Mammary epithelial cell (primary cell): ENCODE measurements at regions of chr9 and their contacts with region 1.

Region 1: GRCh38 chr9:94065535-94065961 is 18.7 kb upstream of the PTPDC1 start:
- DNase-seq: peak; percentile 69
- H3K4me3 ChIP-seq: no peak overlapping the region
- H3K27ac ChIP-seq: no peak overlapping the region
- H3K4me1 ChIP-seq: peaks cover 3% of the 10 kb centered on the region
- H3K27me3 ChIP-seq: no peaks in the 10 kb centered on the region
- CTCF ChIP-seq: peak; percentile 86 to 87

Region 2: GRCh38 chr9:94014065-94014654 is 51.4 kb before region 1 on chr9:
- CTCF ChIA-PET with region 1: interaction called, 5 read pairs
- dilution Hi-C with region 1: no loop called
- in situ Hi-C with region 1: no loop called
- intact Hi-C with region 1: loop called (anchors 1 kb)
- DNase-seq: peak; percentile 24
- H3K4me3 ChIP-seq: no peak overlapping the region
- H3K27ac ChIP-seq: no peak overlapping the region
- H3K4me1 ChIP-seq: no peaks in the 10 kb centered on the region
- H3K27me3 ChIP-seq: no peaks in the 10 kb centered on the region
- CTCF ChIP-seq: peak; percentile 68 to 69

Region 3: GRCh38 chr9:94029932-94030317 is 35.6 kb before region 1 on chr9:
- CTCF ChIA-PET with region 1: no interaction called
- dilution Hi-C with region 1: loop called (anchors 5 kb)
- in situ Hi-C with region 1: no loop called
- intact Hi-C with region 1: no loop called
- DNase-seq: no peak
- H3K4me3 ChIP-seq: peak overlapping the region; percentile 77 to 84 (median 84)
- H3K27ac ChIP-seq: peak overlapping the region; percentile 56
- H3K4me1 ChIP-seq: peaks cover 16% of the 10 kb centered on the region
- H3K27me3 ChIP-seq: no peaks in the 10 kb centered on the region
- CTCF ChIP-seq: no peak

Region 4: GRCh38 chr9:94166237-94166963 is 100.9 kb after region 1 on chr9:
- CTCF ChIA-PET with region 1: no interaction called
- dilution Hi-C with region 1: no loop called
- in situ Hi-C with region 1: loop called in 1 of 2 experiments (anchors 25 kb)
- intact Hi-C with region 1: loop called (anchors 1 kb)
- DNase-seq: peak; percentile 98
- H3K4me3 ChIP-seq: peak overlapping the region; percentile 68 to 98 (median 90)
- H3K27ac ChIP-seq: peak overlapping the region; percentile 96
- H3K4me1 ChIP-seq: peaks cover 13% of the 10 kb centered on the region
- H3K27me3 ChIP-seq: no peaks in the 10 kb centered on the region
- CTCF ChIP-seq: no peak

Region 5: DNA sequence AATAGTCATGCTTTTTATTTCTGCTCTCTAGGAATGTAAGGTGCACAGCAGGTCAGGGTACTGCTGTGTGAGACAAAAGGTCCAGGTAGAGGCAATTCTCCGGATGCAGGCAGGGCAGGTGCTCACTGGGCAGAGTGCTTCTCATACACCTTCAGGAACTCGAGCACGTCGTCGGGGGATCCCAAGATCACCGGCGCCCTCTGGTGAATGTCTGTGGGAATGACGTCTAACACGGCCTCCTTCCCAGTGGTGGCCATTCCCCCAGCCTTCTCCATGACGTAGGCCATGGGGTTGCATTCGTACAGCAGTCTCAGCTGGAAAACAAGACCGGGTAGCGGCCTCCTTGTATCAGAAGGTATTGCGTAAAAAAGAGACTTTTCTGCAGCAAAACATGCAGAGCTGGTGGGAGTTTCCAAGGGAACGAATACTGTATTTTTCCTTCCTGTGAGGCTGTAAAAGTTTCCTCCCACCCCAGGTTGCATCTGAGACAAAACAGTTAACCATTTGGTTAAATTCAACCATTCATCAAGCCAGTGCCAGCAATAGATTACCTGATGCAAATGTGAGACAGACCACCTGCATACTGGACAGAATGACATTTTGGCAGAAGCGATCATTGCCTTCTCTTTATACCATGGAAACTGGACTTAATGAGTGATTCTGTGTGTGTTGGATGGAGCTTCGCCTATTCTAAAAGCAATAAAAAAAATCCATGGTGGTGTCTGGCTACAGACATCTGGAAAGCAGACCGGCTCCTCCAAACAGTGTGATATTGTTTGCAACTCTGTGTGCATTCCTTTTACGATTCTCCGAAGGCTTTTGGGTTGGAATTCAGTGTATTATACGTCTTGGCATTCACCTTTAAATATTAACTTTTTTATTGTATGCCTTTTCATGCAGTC is 538.0 kb after region 1 on chr9:
- CTCF ChIA-PET with region 1: no interaction called
- dilution Hi-C with region 1: no loop called
- in situ Hi-C with region 1: no loop called
- intact Hi-C with region 1: loop called (anchors 2 kb)
- DNase-seq: peak; percentile 70
- H3K4me3 ChIP-seq: no peak overlapping the region
- H3K27ac ChIP-seq: no peak overlapping the region
- H3K4me1 ChIP-seq: no peaks in the 10 kb centered on the region
- H3K27me3 ChIP-seq: peaks cover 5% of the 10 kb centered on the region
- CTCF ChIP-seq: peak; percentile 63 to 85